ENCODE measurements at regions of chrX and their contacts with region 1.

Region 1: GRCh38 chrX:119145241-119145653 is 17.6 kb upstream of the KIAA1210 start:
- DNase-seq: no peak
- H3K4me3 ChIP-seq: no peak overlapping the region
- H3K27ac ChIP-seq: no peak overlapping the region
- H3K27me3 ChIP-seq: peaks cover 0 to 85% (median 21%) of the 10 kb centered on the region in 45 donors
- CTCF ChIP-seq: peak in 43 of 56 donors; percentile 15 to 53 (median 31)

Region 2: GRCh38 chrX:119211649-119212014 is 66.4 kb after region 1 on chrX:
- intact Hi-C with region 1: loop called in 1 of 2 experiments (anchors 10 kb)
- DNase-seq: no peak
- H3K4me3 ChIP-seq: no peak overlapping the region
- H3K27ac ChIP-seq: no peak overlapping the region
- H3K27me3 ChIP-seq: peaks cover 0 to 67% (median 23%) of the 10 kb centered on the region in 45 donors
- CTCF ChIP-seq: no peak

Measured in dorsolateral prefrontal cortex (tissue), 120 donors.